B cell (primary cell): ENCODE measurements at regions of chr2 and their contacts with region 1.

Region 1: DNA sequence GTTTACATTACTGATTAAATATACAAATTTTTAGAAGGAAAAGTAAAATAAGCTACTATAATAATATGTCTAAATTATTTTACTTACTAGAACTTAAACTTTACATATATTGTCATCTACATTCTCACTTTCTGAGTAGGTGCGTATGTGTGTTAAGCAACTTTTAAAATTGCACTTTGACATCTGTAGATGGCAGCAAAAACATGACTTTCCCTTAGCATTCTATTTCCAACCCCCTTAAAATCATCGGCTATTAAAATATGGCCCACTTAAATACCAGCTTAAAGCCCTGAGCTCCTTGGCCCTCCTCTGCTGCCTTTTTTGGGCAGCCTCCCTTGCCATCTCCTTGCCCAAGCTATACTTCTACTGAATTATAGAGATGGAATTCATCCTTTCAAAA is 78.0 kb downstream of the UPP2 start:
- DNase-seq: peak; percentile 20
- ATAC-seq: no peak
- H3K4me3 ChIP-seq: no peak overlapping the region
- H3K4me3 Mint-ChIP-seq: no peak overlapping the region
- H3K27ac ChIP-seq: no peak overlapping the region
- H3K27ac Mint-ChIP-seq: no peak overlapping the region
- H3K4me1 ChIP-seq: peaks cover 0 to 3% of the 10 kb centered on the region in 2 donors
- H3K4me1 Mint-ChIP-seq: peaks cover 2% of the 10 kb centered on the region
- H3K27me3 ChIP-seq: peaks cover 0 to 5% (median 0%) of the 10 kb centered on the region in 4 experiments
- H3K27me3 Mint-ChIP-seq: peaks cover 12% of the 10 kb centered on the region
- CTCF ChIP-seq: peak; percentile 44

Region 2: GRCh38 chr2:157229572-157229971 is 950.1 kb before region 1 on chr2:
- CTCF ChIA-PET with region 1: no interaction called
- POLR2A ChIA-PET with region 1: no interaction called
- intact Hi-C with region 1: no loop called
- DNase-seq: no peak
- ATAC-seq: no peak
- H3K4me3 ChIP-seq: no peak overlapping the region
- H3K4me3 Mint-ChIP-seq: no peak overlapping the region
- H3K27ac ChIP-seq: no peak overlapping the region
- H3K27ac Mint-ChIP-seq: no peak overlapping the region
- H3K4me1 ChIP-seq: no peaks in the 10 kb centered on the region
- H3K4me1 Mint-ChIP-seq: no peaks in the 10 kb centered on the region
- H3K27me3 ChIP-seq: no peaks in the 10 kb centered on the region
- H3K27me3 Mint-ChIP-seq: peaks cover 8% of the 10 kb centered on the region
- CTCF ChIP-seq: no peak

Region 3: DNA sequence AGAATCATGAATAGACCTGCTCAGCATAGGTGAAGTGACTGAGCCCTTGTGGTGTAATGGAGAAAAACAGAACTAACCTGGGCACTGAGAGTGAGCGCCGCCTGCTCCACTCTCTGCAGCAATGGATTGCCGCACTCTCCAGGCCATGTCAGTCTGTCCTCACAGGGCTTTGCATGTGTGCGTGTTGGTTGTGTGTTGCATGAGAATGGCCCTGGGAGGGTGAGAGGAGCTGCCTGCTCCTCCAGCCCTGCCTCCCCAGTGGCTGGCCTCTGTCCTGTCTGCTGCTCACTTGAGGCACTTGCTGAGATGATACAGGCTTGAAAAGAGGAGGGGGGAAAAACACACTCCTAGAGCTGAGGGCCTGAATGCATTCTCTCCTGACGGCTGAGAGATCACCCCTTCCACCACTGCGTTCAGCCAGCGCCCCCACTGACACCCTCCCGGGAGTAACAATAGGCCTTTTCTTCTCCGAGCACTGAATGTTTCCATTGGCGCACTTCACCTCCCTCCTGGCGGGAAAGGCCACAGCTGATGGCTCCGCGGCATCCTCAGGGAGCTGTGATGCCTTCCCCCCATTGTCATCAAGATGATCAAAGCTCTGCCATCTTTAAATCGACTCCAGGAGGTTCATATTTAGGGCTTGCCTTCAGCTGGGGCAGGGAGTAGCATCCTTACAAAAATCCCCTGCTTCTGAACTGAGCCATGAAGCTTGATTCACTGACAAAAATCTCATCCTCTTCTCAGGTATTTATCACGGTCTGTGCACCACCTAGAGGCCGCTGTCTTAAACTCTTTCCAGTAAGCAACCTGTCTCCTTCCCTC is 565.6 kb after region 1 on chr2:
- CTCF ChIA-PET with region 1: interaction called, 102 read pairs
- POLR2A ChIA-PET with region 1: no interaction called
- intact Hi-C with region 1: no loop called
- DNase-seq: peak; percentile 44
- ATAC-seq: no peak
- H3K4me3 ChIP-seq: no peak overlapping the region
- H3K4me3 Mint-ChIP-seq: no peak overlapping the region
- H3K27ac ChIP-seq: no peak overlapping the region
- H3K27ac Mint-ChIP-seq: no peak overlapping the region
- H3K4me1 ChIP-seq: no peaks in the 10 kb centered on the region
- H3K4me1 Mint-ChIP-seq: no peaks in the 10 kb centered on the region
- H3K27me3 ChIP-seq: peaks cover 0 to 10% (median 0%) of the 10 kb centered on the region in 4 experiments
- H3K27me3 Mint-ChIP-seq: peaks cover 3% of the 10 kb centered on the region
- CTCF ChIP-seq: peak; percentile 18